ENCODE measurements at regions of chr4 and their contacts with region 1.

Region 1: DNA sequence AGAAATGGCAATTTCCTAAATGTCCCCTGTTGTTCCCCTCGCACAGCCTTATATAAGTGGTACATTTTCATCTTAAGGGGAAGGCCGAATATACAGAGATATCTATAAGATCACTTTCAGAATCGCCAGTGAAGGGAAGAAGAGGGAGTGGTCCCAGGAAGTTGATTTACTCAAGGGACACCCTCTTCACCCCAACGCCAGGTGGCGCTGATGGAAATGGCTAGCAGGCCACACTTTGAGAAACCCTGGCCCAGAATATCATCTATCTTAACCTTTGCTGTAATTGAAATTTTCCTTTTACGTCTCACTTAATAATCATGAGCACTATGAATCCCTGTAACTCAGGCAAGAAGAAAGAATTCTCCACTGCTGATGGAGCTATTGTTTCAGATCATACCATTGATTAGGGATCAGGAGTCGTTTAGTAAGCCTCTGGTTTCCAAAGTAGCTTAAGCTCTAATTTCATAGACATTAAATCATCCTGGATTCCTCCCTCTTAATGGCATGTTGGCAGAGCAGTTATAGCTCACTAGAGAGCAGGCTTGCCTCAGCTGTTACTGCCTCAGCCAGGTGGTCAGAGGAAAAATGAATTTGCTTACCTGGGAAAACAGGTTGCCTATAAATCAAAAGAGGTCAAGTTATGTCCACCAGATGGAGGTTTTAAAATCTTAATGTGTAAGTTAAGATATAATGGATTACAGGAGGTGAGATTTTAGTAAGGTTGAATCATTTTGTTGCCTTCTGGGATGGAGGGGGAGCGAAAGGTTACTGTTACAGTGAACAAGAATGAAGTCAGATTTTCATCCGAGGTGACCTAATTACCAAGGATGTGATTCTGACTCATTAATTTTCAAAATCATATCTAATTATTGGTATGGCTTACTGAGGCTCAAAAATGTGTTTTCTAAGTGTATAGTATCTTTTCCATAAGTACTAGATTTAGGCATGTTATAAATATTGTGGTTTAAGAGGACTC is 941.2 kb upstream of the TENM3 start:
- DNase-seq: peak; percentile 74
- H3K4me3 ChIP-seq: peak overlapping the region; percentile 32
- H3K27ac ChIP-seq: no peak overlapping the region
- H3K4me1 ChIP-seq: no peaks in the 10 kb centered on the region
- CTCF ChIP-seq: peak; percentile 92

Region 2: GRCh38 chr4:181225616-181226261 is 76.3 kb before region 1 on chr4:
- CTCF ChIA-PET with region 1: no interaction called
- POLR2A ChIA-PET with region 1: no interaction called
- intact Hi-C with region 1: no loop called
- DNase-seq: no peak
- H3K4me3 ChIP-seq: no peak overlapping the region
- H3K27ac ChIP-seq: no peak overlapping the region
- H3K4me1 ChIP-seq: no peaks in the 10 kb centered on the region
- CTCF ChIP-seq: no peak

Region 3: DNA sequence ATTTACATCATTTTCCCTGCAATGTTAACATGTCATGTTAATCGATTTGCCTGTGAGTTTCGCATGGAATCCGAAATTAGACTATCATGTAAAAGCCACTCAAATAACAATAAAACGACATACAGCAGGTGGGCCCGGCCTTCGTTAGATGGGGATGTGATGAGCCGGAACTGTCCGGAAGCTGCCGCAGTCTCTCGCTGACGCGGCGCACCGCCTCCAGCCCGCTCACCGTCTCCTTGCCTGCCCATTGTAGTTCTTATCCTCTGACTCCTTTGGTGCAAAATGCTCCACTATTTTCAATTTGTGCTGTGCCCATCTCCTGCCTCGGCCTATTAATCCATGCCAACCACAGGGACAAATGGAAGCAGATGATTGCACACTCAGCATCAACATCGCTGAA is 63.6 kb after region 1 on chr4:
- CTCF ChIA-PET with region 1: no interaction called
- POLR2A ChIA-PET with region 1: no interaction called
- intact Hi-C with region 1: loop called (anchors 5 kb)
- DNase-seq: no peak
- H3K4me3 ChIP-seq: no peak overlapping the region
- H3K27ac ChIP-seq: no peak overlapping the region
- H3K4me1 ChIP-seq: no peaks in the 10 kb centered on the region
- CTCF ChIP-seq: no peak

Region 4: DNA sequence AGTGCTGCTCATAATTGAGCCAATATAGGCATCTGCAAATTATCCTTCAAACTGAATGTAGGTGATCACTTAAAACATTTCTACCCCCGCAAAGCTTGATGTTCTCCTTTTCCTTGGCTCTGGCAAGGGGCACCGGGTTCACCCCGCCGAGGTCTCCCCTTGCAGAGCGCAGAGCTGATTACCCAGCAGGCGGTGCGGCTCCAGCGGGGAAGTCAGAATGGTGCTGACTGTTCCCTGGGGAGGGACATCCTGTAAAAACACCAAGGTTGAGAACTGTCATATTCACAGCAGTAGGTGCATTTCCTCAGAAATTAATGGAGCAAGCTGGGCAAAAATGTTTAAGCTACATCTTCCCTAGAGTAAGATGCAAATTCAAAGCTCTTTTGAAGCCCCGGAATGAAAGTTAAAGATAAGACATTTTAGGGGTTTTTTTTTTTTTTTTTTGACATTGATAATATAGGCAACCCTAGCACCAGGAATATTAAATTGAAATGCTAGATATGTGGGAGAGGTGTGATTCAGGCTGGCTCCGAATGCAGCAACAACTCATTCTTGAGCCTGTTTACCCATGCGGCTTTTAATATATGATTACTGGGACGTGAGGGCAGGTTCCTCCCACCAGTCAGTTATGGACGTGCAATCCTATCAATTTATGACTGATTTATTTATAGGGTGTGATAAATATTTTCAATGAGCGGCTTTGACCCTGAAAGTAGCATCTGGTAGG is 173.9 kb after region 1 on chr4:
- CTCF ChIA-PET with region 1: no interaction called
- POLR2A ChIA-PET with region 1: no interaction called
- intact Hi-C with region 1: no loop called
- DNase-seq: no peak
- H3K4me3 ChIP-seq: no peak overlapping the region
- H3K27ac ChIP-seq: no peak overlapping the region
- H3K4me1 ChIP-seq: no peaks in the 10 kb centered on the region
- CTCF ChIP-seq: no peak